Psoas muscle (tissue), 8 donors: ENCODE measurements at regions of chr17 and their contacts with region 1.

Region 1: DNA sequence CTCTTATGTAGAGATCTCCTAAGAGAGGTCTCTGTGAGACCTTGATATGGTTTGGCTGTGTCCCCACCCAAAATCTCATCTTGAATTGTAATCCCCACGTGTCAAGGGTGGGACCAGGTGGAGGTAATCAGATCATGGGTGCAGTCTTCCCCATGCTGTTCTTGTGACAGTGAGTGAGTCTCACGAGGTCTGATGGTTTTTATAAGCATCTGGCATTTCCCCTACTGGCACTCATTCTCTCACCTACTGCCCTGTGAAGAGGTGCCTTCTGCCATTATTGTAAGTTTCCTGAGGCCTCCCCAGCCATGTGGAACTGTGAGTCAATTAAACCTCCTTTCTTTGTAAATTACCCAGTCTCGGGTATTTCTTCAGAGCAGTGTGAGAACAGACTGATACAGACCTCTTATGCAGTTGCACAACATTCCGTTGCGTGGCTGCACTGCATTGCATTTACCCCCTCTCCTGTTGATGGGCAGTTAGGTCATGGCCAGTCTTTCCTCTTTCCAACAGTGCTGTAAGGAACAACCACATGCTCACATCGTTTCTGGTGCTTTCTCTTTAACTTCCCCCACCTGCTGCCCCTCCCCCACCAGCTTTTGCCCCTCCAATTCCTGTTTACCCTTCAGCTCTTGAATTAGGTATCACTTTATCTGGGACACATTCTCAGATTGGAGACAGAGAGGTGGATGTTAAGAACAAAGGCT is 43.6 kb upstream of the MED9 start:
- DNase-seq: no peak
- ATAC-seq: no peak
- H3K4me3 ChIP-seq: no peak overlapping the region
- H3K27ac ChIP-seq: no peak overlapping the region
- H3K4me1 ChIP-seq: no peaks in the 10 kb centered on the region
- H3K27me3 ChIP-seq: no peaks in the 10 kb centered on the region
- CTCF ChIP-seq: no peak

Region 2: GRCh38 chr17:17467720-17468119 is 34.6 kb after region 1 on chr17:
- intact Hi-C with region 1: loop called in 1 of 2 experiments (anchors 5 kb)
- DNase-seq: no peak
- ATAC-seq: peak in 1 of 4 donors; percentile 32
- H3K4me3 ChIP-seq: no peak overlapping the region
- H3K27ac ChIP-seq: no peak overlapping the region
- H3K4me1 ChIP-seq: no peaks in the 10 kb centered on the region
- H3K27me3 ChIP-seq: peaks cover 0 to 8% (median 2%) of the 10 kb centered on the region in 3 donors
- CTCF ChIP-seq: no peak